Lower leg skin (tissue), 4 donors: ENCODE measurements at regions of chr11 and their contacts with region 1.

Region 1: GRCh38 chr11:16815043-16815767 is 76.8 kb downstream of the C11orf58 start:
- DNase-seq: peak; percentile 64 to 95
- H3K4me3 ChIP-seq: no peak overlapping the region
- CTCF ChIP-seq: no peak
- POLR2A ChIP-seq: no peak

Region 2: DNA sequence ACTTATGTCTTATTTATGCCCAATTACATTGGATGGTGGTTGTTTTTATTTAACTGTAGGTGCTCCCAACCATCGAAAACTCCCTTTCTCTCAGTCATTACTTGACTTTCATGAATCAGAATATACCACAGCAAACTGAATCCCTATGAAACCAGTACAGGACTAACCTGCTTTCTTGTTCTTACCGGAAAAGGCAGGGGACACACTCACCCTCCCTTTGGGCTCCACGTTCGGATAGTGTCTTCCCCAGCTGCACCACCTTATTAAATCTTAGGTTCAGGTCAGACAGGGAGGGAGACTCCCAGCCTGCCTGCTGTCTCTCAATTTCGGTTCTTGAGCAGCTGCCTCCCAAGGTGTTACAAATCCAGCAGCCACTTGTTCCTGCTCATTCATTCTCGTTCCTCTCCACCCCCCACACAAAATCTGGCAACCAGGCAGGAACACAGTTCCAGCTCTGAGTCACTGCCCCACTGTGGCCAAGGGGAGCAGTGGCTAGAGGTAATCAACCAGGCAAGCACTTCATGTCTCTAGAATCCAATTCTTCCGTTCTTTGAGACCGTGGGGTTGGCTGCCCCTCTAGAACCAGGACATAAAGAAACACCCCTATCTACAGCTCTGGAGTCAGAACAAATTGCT is 66.0 kb after region 1 on chr11:
- intact Hi-C with region 1: loop called (anchors 5 kb)
- DNase-seq: peak; percentile 52 to 90
- H3K4me3 ChIP-seq: no peak overlapping the region
- CTCF ChIP-seq: no peak
- POLR2A ChIP-seq: no peak